ENCODE measurements at regions of chr6 and their contacts with region 1.

Region 1: GRCh38 chr6:67361264-67361663 is 1273.8 kb upstream of the ADGRB3 start:
- DNase-seq: no peak
- ATAC-seq: peak; percentile 65
- H3K4me3 ChIP-seq: peak overlapping the region; percentile 13; the same call in 1 of the 2 replicates
- H3K27ac ChIP-seq: peak overlapping the region; percentile 65; the same call in 2 of the 3 replicates
- H3K4me1 ChIP-seq: no peaks in the 10 kb centered on the region; a peak in 2 of 5 replicates
- H3K27me3 ChIP-seq: no peaks in the 10 kb centered on the region
- CTCF ChIP-seq: no peak
- EP300 ChIP-seq: no peak
- POLR2A ChIP-seq: no peak
- RAD21 ChIP-seq: no peak

Region 2: GRCh38 chr6:67073938-67074337 is 287.3 kb before region 1 on chr6:
- CTCF ChIA-PET with region 1: no interaction called
- POLR2A ChIA-PET with region 1: no interaction called
- in situ Hi-C with region 1: no loop called
- intact Hi-C with region 1: loop called (anchors 10 kb)
- DNase-seq: no peak
- ATAC-seq: no peak
- H3K4me3 ChIP-seq: no peak overlapping the region
- H3K27ac ChIP-seq: no peak overlapping the region
- H3K4me1 ChIP-seq: no peaks in the 10 kb centered on the region
- H3K27me3 ChIP-seq: no peaks in the 10 kb centered on the region
- CTCF ChIP-seq: no peak
- EP300 ChIP-seq: no peak
- POLR2A ChIP-seq: no peak
- RAD21 ChIP-seq: no peak

Region 3: GRCh38 chr6:67311817-67312216 is 49.4 kb before region 1 on chr6:
- CTCF ChIA-PET with region 1: no interaction called
- POLR2A ChIA-PET with region 1: no interaction called
- in situ Hi-C with region 1: no loop called
- intact Hi-C with region 1: no loop called
- DNase-seq: no peak
- ATAC-seq: no peak
- H3K4me3 ChIP-seq: no peak overlapping the region
- H3K27ac ChIP-seq: no peak overlapping the region
- H3K4me1 ChIP-seq: no peaks in the 10 kb centered on the region
- H3K27me3 ChIP-seq: no peaks in the 10 kb centered on the region
- CTCF ChIP-seq: no peak
- EP300 ChIP-seq: no peak
- POLR2A ChIP-seq: no peak
- RAD21 ChIP-seq: no peak